ENCODE measurements at regions of chr20 and their contacts with region 1.

Region 1: GRCh38 chr20:13105864-13106457 is 97.2 kb downstream of the SPTLC3 start:
- DNase-seq: no peak
- H3K4me3 ChIP-seq: no peak overlapping the region
- H3K27ac ChIP-seq: no peak overlapping the region
- H3K4me1 ChIP-seq: peaks cover 0 to 6% (median 0%) of the 10 kb centered on the region in 6 donors
- H3K27me3 ChIP-seq: peaks cover 0 to 8% (median 0%) of the 10 kb centered on the region in 7 donors
- CTCF ChIP-seq: peak; percentile 15 to 72 (median 42)
- POLR2A ChIP-seq: no peak

Region 2: DNA sequence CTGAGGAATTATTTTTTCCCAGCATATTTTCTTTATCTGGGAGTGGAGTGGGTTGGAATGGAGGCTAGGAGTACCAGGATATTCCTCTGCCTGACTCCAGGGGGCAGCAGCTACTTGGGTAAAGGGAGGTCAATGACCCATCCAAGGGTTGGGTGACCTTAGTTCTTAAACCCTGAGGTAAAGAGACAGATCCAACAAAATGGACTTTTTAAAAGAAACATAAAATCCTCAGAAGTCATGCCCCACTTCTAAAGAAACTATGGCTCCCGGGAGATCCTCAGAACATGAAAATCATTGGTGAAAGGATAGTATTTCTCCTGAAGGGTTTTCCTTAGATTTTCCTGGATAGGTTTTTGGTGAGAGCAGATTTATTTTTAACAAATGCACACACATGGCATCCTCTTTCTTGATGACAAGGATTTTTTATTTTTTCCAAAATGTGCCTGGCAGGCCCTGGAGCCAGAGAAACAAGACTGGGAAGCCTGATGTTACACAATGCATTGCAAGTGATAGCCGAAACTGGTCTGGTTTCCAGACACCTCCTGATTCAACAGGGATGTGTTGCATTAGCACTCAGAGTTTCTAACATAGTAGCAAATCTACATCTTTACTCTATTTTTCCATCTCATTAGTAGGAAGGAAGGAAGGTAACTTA is 1429.2 kb before region 1 on chr20:
- intact Hi-C with region 1: loop called (anchors 5 kb)
- DNase-seq: no peak
- H3K4me3 ChIP-seq: no peak overlapping the region
- H3K27ac ChIP-seq: no peak overlapping the region
- H3K4me1 ChIP-seq: no peaks in the 10 kb centered on the region
- H3K27me3 ChIP-seq: no peaks in the 10 kb centered on the region
- CTCF ChIP-seq: peak in 10 of 11 experiments; percentile 19 to 68 (median 58)
- POLR2A ChIP-seq: no peak

Region 3: GRCh38 chr20:12970372-12970821 is 135.6 kb before region 1 on chr20:
- intact Hi-C with region 1: loop called (anchors 10 kb)
- DNase-seq: no peak
- H3K4me3 ChIP-seq: no peak overlapping the region
- H3K27ac ChIP-seq: no peak overlapping the region
- H3K4me1 ChIP-seq: no peaks in the 10 kb centered on the region
- H3K27me3 ChIP-seq: no peaks in the 10 kb centered on the region
- CTCF ChIP-seq: peak in 8 of 11 experiments; percentile 10 to 43 (median 38)
- POLR2A ChIP-seq: no peak

Region 4: GRCh38 chr20:13644010-13644409 is 538.0 kb after region 1 on chr20:
- intact Hi-C with region 1: no loop called
- DNase-seq: no peak
- H3K4me3 ChIP-seq: no peak overlapping the region
- H3K27ac ChIP-seq: no peak overlapping the region
- H3K4me1 ChIP-seq: peaks cover 0 to 11% (median 3%) of the 10 kb centered on the region in 6 donors
- H3K27me3 ChIP-seq: no peaks in the 10 kb centered on the region
- CTCF ChIP-seq: no peak
- POLR2A ChIP-seq: no peak

Measured in spleen (tissue), 13 donors.